ENCODE measurements at regions of chr7 and their contacts with region 1.

Region 1: GRCh38 chr7:23597094-23598091 is at the start of gene CCDC126:
- DNase-seq: peak; percentile 88
- H3K4me3 Mint-ChIP-seq: peak within 1 kb of the TSS; percentile 87
- H3K27ac Mint-ChIP-seq: peak within 1 kb of the TSS; percentile 64
- H3K4me1 Mint-ChIP-seq: peaks cover 61% of the 10 kb centered on the region
- H3K27me3 Mint-ChIP-seq: no peaks in the 10 kb centered on the region
- total RNA-seq, gene CCDC126: 5.2 to 5.7 TPM

Region 2: GRCh38 chr7:23105644-23106056 is 491.7 kb before region 1 on chr7 and contains the start of gene KLHL7:
- CTCF ChIA-PET with region 1: no interaction called
- POLR2A ChIA-PET with region 1: no interaction called
- intact Hi-C with region 1: loop called (anchors 5 kb)
- DNase-seq: peak; percentile 97
- H3K4me3 Mint-ChIP-seq: peak within 1 kb of the TSS; percentile 98
- H3K27ac Mint-ChIP-seq: peak within 1 kb of the TSS; percentile 88
- H3K4me1 Mint-ChIP-seq: peaks cover 41% of the 10 kb centered on the region
- H3K27me3 Mint-ChIP-seq: no peaks in the 10 kb centered on the region
- total RNA-seq, gene KLHL7: 24.3 to 24.8 TPM

Region 3: DNA sequence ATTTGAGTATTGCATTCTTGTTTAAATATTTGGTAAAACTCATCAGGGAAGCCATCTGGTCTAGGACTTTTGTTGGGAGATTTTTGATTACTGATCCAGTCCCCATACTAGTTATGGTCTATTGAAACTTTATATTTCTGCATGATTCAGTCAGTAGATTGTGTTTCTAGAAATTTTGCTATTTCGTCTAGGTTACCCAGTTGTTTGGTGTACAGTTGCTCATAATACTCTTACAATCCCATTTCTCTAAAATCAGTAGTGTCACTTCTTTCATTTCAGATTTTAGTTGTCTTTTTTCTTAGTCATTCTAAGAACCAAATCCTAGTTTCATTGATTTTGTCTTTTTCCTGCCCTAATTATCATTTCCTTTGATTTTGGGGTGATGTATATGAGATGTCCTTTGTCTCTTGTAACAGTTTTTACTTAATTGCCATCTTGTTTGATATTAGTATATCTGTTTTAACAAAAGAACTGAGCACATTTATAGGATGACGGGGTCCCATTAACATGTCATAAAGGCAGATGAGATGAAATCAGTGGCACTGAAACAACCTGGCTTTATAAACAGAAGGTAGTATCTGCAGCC is 290.4 kb before region 1 on chr7:
- CTCF ChIA-PET with region 1: no interaction called
- POLR2A ChIA-PET with region 1: no interaction called
- intact Hi-C with region 1: loop called (anchors 1 kb)
- DNase-seq: no peak
- H3K4me3 Mint-ChIP-seq: no peak overlapping the region
- H3K27ac Mint-ChIP-seq: peak overlapping the region; percentile 55
- H3K4me1 Mint-ChIP-seq: peaks cover 45% of the 10 kb centered on the region
- H3K27me3 Mint-ChIP-seq: no peaks in the 10 kb centered on the region

Region 4: GRCh38 chr7:23404546-23405239 is 192.7 kb before region 1 on chr7:
- CTCF ChIA-PET with region 1: no interaction called
- POLR2A ChIA-PET with region 1: no interaction called
- intact Hi-C with region 1: loop called (anchors 1 kb)
- DNase-seq: peak; percentile 51
- H3K4me3 Mint-ChIP-seq: peak overlapping the region; percentile 0
- H3K27ac Mint-ChIP-seq: peak overlapping the region; percentile 90
- H3K4me1 Mint-ChIP-seq: peaks cover 31% of the 10 kb centered on the region
- H3K27me3 Mint-ChIP-seq: peaks cover 5% of the 10 kb centered on the region

Region 5: GRCh38 chr7:23679898-23680413 is 82.6 kb after region 1 on chr7 and contains the start of gene FAM221A:
- CTCF ChIA-PET with region 1: interaction called, 9 read pairs
- POLR2A ChIA-PET with region 1: interaction called, 3 read pairs
- intact Hi-C with region 1: loop called (anchors 1 kb)
- DNase-seq: peak; percentile 90
- H3K4me3 Mint-ChIP-seq: peak within 1 kb of the TSS; percentile 84
- H3K27ac Mint-ChIP-seq: peak within 1 kb of the TSS; percentile 73
- H3K4me1 Mint-ChIP-seq: peaks cover 9% of the 10 kb centered on the region
- H3K27me3 Mint-ChIP-seq: peaks cover 5% of the 10 kb centered on the region
- total RNA-seq, gene FAM221A: 9.0 to 10.7 TPM